ENCODE measurements at regions of chr15 and their contacts with region 1.

Region 1: DNA sequence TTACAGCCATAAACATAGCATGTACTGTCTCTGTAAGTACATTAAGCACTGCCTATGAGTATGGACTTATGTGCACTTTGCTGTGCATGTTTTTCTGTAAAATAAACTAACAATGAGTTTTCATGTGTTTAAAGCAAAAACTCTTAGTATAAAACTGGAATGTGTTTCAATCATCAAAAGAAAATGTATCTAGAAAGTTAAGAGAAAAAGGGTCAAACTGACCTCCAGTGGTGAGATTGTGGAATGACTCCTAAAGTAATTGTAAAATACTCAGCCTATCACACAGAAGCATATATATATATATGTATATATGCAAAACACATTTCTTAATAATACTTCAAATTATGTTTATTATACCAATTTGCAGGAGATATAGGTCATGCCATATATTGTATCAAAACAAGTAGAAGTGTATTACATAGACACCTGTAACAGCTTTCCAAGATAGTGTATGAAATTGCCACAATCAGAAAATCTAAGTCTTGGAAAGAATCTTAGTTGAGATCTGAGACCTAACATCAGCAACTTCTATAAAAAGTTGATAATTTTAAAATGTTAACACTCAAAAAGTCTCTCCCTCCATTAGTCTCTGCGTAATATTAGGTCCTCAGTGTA is 199.6 kb downstream of the FMN1 start:
- DNase-seq: no peak
- H3K4me3 ChIP-seq: no peak overlapping the region
- CTCF ChIP-seq: peak; percentile 22

Region 2: GRCh38 chr15:32651229-32651837 is 343.6 kb before region 1 on chr15:
- CTCF ChIA-PET with region 1: interaction called, 150 read pairs
- POLR2A ChIA-PET with region 1: no interaction called
- DNase-seq: peak; percentile 33
- H3K4me3 ChIP-seq: no peak overlapping the region
- CTCF ChIP-seq: peak; percentile 90

Region 3: DNA sequence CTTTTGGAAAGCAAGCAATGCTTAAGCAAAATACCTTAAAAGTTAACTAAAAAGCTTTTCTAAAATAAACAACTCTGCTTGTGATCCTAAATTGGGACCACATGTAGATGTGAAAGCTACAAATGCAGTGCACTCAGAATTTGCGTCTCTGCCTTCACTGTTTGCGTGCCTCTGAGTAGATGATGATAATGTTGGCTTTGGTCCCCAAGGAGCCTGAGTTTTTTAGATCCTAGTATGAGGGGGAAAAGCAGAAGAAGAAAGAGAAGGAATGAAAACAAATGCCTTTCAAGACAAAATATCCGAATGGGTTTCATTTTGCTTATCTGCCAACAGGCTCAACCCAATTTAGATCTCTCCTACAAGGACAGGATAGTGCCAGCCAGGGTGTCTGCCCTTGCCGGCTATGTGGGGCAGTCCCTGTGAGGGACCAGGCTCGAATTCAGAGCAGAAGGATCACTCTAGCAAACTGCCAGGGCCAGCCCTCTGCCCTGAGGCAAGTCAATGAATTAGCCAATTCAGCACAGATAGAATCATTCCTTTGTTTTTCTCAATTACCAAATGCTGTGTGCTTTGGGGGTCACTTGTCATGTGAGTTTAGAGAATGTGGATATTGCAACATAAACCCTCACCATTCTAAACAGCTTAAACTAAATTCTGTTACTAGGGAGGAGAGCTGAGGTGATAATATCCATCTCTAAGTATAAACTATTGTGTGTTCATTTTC is 324.9 kb before region 1 on chr15:
- CTCF ChIA-PET with region 1: interaction called, 13 read pairs
- POLR2A ChIA-PET with region 1: no interaction called
- DNase-seq: no peak
- H3K4me3 ChIP-seq: peak overlapping the region; percentile 34
- CTCF ChIP-seq: no peak

Region 4: DNA sequence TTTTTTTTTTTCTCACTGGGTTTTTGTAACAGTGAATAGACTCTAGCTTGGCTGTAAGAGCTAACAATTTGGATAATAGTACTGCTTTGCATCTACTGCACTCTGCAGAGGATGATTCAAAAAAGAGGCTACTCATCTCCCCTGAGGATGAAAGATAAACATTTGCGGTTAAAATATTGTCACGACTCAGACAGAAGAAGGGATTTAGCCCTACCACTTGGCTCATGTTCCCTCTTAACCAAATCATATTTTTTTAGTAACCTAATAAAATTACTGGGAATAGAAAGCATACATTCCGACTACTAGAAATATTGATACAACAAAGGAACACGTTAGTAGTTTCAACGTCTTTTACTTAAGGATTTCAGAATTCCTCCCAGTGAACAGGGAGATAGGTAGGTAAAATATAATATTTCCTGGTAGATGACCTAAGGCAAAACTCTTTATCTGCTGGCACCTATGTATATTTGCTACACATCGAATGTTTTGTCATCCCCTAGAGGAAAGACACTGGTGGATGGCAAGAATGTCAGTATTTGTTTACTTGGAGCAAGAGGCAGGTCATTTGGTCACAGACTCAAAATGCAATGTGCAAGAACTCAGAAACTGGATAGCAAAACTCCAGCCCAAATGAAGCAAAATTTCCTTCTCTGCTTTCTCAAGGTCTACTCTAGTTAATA is 166.3 kb before region 1 on chr15:
- CTCF ChIA-PET with region 1: interaction called, 20 read pairs
- POLR2A ChIA-PET with region 1: interaction called, 3 read pairs
- DNase-seq: peak; percentile 96
- H3K4me3 ChIP-seq: no peak overlapping the region
- CTCF ChIP-seq: no peak

Region 5: GRCh38 chr15:32844118-32844711 is 150.7 kb before region 1 on chr15:
- CTCF ChIA-PET with region 1: interaction called, 92 read pairs
- POLR2A ChIA-PET with region 1: interaction called, 3 read pairs
- DNase-seq: no peak
- H3K4me3 ChIP-seq: no peak overlapping the region
- CTCF ChIP-seq: peak; percentile 48

Region 6: GRCh38 chr15:33007303-33007855 is 12.5 kb after region 1 on chr15:
- CTCF ChIA-PET with region 1: interaction called, 12 read pairs
- POLR2A ChIA-PET with region 1: no interaction called
- DNase-seq: no peak
- H3K4me3 ChIP-seq: no peak overlapping the region
- CTCF ChIP-seq: peak; percentile 13

Region 7: GRCh38 chr15:33045066-33045810 is 50.3 kb after region 1 on chr15:
- CTCF ChIA-PET with region 1: no interaction called
- POLR2A ChIA-PET with region 1: no interaction called
- DNase-seq: no peak
- H3K4me3 ChIP-seq: no peak overlapping the region
- CTCF ChIP-seq: no peak

Region 8: DNA sequence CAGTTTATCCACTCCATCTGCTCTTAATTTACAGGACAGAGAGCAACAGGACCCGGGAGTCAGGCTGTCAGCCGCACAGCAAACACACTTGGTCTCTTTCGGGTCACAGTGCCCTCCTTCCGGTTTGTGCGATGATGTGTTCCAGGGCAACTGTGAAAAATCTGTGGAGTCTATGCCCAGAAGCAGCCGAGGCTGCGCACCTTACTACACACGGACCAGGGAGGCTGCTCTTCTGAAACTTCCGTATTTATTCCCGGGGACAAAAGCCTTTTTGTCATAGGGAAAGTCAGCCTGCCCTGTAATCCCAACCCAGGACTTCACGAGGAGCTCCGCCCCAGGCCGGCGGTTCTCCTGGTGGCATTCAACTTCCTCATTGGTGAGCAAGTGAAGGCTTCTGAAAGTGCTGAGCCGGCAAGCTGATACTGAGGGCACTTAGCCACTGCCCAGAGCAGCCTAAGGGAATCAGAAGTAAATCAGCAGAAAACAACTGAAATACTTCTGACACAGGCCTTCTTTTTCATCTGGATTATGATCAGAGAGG is 73.1 kb after region 1 on chr15:
- CTCF ChIA-PET with region 1: no interaction called
- POLR2A ChIA-PET with region 1: no interaction called
- DNase-seq: no peak
- H3K4me3 ChIP-seq: peak overlapping the region; percentile 59
- CTCF ChIP-seq: no peak

Region 9: GRCh38 chr15:33132722-33133345 is 137.9 kb after region 1 on chr15:
- CTCF ChIA-PET with region 1: interaction called, 18 read pairs
- POLR2A ChIA-PET with region 1: no interaction called
- DNase-seq: no peak
- H3K4me3 ChIP-seq: no peak overlapping the region
- CTCF ChIP-seq: peak; percentile 61

Region 10: GRCh38 chr15:33526532-33526931 is 531.6 kb after region 1 on chr15:
- CTCF ChIA-PET with region 1: no interaction called
- POLR2A ChIA-PET with region 1: no interaction called
- DNase-seq: no peak
- H3K4me3 ChIP-seq: no peak overlapping the region
- CTCF ChIP-seq: no peak

Measured in AG04449 (cell line).